ENCODE measurements at regions of chr1 and their contacts with region 1.

Region 1: GRCh38 chr1:168342572-168343280 is 62.0 kb downstream of the TBX19 start:
- DNase-seq: peak; percentile 87
- H3K4me3 ChIP-seq: no peak overlapping the region
- H3K27ac ChIP-seq: no peak overlapping the region
- H3K4me1 ChIP-seq: no peaks in the 10 kb centered on the region
- H3K27me3 ChIP-seq: no peaks in the 10 kb centered on the region
- CTCF ChIP-seq: peak; percentile 86

Region 2: DNA sequence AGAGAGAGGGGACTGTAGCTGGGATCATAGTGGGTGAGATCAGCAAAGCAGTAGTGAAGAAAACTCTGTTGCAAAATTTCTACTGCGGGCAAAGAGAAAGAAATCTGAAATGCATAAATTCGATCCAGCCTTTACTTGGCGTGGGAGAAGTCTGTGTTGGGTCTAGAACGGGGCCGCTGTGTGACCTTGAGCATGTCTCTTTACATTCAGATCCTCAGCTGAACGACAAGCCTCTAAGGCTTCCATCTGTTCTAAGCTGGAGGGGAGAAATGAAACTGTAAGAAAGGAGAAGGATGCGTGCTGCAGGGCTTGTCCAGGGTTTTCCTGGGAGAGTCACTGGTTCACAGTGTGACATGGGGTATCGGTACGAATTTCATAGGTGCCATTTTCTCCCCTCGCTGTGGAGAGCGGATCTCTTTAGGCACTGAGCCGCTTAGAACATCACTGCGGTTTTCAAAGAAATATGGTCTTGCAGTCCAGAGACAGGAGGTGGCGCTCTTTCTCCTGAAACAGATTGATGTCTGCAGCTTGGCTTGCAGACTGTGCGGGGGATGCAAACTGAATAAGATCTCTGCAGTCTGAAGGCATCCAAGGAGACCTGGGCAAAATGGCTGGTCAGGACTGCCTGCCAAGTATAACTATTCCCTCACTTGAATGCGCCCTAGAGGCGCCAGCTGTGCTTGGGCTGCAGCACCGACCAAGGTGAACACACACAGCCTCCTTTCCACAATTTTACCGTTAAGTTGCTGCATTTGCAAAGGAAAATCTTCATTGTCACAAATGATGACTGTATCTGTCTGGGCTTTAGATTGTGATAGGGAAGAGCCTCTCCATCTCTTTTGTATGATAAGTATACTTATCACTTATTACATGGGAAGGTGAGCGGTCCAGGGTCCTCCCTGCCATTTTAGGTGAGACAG is 97.0 kb after region 1 on chr1:
- intact Hi-C with region 1: loop called (anchors 5 kb)
- DNase-seq: peak; percentile 83
- H3K4me3 ChIP-seq: no peak overlapping the region
- H3K27ac ChIP-seq: no peak overlapping the region
- H3K4me1 ChIP-seq: no peaks in the 10 kb centered on the region
- H3K27me3 ChIP-seq: no peaks in the 10 kb centered on the region
- CTCF ChIP-seq: peak; percentile 73

Measured in colonic mucosa (tissue), 4 donors.